ENCODE measurements at regions of chr3 and their contacts with region 1.

Region 1: DNA sequence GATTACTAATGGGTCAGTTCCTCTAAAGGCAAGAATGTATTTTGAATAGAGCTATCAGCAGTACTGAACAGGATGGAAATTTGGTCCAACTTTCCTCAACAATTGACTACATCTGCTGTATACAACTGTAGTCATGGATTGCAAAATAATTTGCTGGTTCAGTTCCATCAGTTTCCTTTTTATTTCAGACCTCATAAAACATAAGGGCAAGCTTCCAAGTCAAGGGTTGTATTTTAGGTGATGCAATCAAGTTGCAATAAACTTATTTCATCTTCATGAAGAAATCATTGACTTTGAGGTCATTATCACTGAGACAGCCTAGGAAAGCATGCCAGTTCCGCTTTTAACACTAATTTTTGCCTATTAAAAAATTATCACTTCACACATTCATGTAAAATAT is 90.4 kb upstream of the TSEN2 start:
- DNase-seq: peak; percentile 68
- H3K4me3 ChIP-seq: no peak overlapping the region
- CTCF ChIP-seq: no peak

Region 2: GRCh38 chr3:12349895-12350813 is 43.7 kb before region 1 on chr3:
- in situ Hi-C with region 1: loop called (anchors 5 kb)
- DNase-seq: no peak
- H3K4me3 ChIP-seq: no peak overlapping the region
- CTCF ChIP-seq: no peak

Measured in astrocyte of the cerebellum (primary cell).